ENCODE measurements at regions of chr1 and their contacts with region 1.

Region 1: GRCh38 chr1:211944733-211945500 is 90.4 kb downstream of the INTS7 start:
- DNase-seq: peak; percentile 93
- H3K4me3 ChIP-seq: no peak overlapping the region
- H3K27ac ChIP-seq: peak overlapping the region; percentile 5
- H3K4me1 ChIP-seq: peaks cover 14% of the 10 kb centered on the region
- H3K27me3 ChIP-seq: no peaks in the 10 kb centered on the region
- CTCF ChIP-seq: peak; percentile 97 to 98

Region 2: GRCh38 chr1:211698161-211699026 is 246.5 kb before region 1 on chr1:
- CTCF ChIA-PET with region 1: interaction called, 9 read pairs
- dilution Hi-C with region 1: no loop called
- in situ Hi-C with region 1: loop called (anchors 10 to 25 kb)
- intact Hi-C with region 1: loop called (anchors 1 kb)
- DNase-seq: peak; percentile 64
- H3K4me3 ChIP-seq: no peak overlapping the region
- H3K27ac ChIP-seq: no peak overlapping the region
- H3K4me1 ChIP-seq: peaks cover 5% of the 10 kb centered on the region
- H3K27me3 ChIP-seq: no peaks in the 10 kb centered on the region
- CTCF ChIP-seq: peak; percentile 91 to 99

Region 3: GRCh38 chr1:211705467-211706091 is 239.3 kb before region 1 on chr1:
- CTCF ChIA-PET with region 1: no interaction called
- dilution Hi-C with region 1: no loop called
- in situ Hi-C with region 1: loop called (anchors 10 to 25 kb)
- intact Hi-C with region 1: no loop called
- DNase-seq: peak; percentile 78
- H3K4me3 ChIP-seq: no peak overlapping the region
- H3K27ac ChIP-seq: peak overlapping the region; percentile 29
- H3K4me1 ChIP-seq: peaks cover 22% of the 10 kb centered on the region
- H3K27me3 ChIP-seq: no peaks in the 10 kb centered on the region
- CTCF ChIP-seq: no peak

Region 4: DNA sequence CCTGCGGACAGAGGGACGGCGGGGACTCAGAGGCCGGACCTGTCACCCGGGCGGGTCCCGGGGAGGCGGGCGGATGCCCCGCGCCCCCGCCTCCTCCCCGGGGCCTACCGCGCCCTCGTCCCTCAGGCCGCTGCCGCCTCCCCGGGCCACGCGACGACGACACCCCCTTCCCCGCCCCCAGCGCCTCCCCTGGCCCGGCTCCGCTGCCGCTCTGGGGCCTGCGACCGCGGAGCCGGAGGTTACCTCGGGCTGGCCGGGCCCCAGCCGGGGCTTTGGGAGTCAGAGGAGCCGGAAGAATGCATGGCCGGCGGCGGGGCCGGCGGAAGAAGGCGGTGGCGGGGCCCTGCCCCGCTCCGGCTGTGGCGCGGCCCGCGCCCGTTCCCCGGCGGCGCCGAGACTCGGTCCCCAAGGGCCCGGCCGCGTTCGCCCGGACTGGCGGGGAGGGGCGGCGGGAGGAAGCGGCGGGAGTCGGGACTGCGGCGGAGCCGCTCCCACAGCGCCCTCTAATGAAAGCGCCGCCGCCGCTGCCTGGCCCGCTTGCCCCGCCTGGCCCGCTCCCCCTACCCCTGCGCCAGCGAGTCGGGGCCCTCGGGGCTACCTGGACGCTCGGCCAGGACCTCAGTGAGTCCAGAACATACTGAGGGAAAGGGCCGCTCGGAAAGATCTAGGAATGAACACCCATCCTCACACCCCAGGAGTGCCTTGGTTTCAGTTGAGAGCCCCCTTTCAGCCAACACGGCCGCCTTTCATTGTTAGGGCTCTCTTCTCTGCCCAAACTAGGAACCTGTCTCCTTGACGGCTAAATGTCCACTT is 114.4 kb before region 1 on chr1 and contains the start of gene LPGAT1:
- CTCF ChIA-PET with region 1: no interaction called
- dilution Hi-C with region 1: no loop called
- in situ Hi-C with region 1: no loop called
- intact Hi-C with region 1: loop called (anchors 1 kb)
- DNase-seq: peak; percentile 53
- H3K4me3 ChIP-seq: peak within 1 kb of the TSS; percentile 69 to 84 (median 75)
- H3K27ac ChIP-seq: peak within 1 kb of the TSS; percentile 44
- H3K4me1 ChIP-seq: peaks cover 15% of the 10 kb centered on the region
- H3K27me3 ChIP-seq: no peaks in the 10 kb centered on the region
- CTCF ChIP-seq: peak; percentile 19 to 59
- total RNA-seq, gene LPGAT1: 42.0 to 44.5 TPM

Region 5: GRCh38 chr1:211965108-211965805 is 20.3 kb after region 1 on chr1:
- CTCF ChIA-PET with region 1: interaction called, 13 read pairs
- dilution Hi-C with region 1: no loop called
- in situ Hi-C with region 1: no loop called
- intact Hi-C with region 1: no loop called
- DNase-seq: no peak
- H3K4me3 ChIP-seq: no peak overlapping the region
- H3K27ac ChIP-seq: no peak overlapping the region
- H3K4me1 ChIP-seq: no peaks in the 10 kb centered on the region
- H3K27me3 ChIP-seq: no peaks in the 10 kb centered on the region
- CTCF ChIP-seq: no peak

Measured in mammary epithelial cell (primary cell).